Activated CD4-positive, alpha-beta memory T cell treated with anti-CD3 and anti-CD28 coated beads for 36 hours (primary cell): ENCODE measurements at regions of chr5 and their contacts with region 1.

Region 1: DNA sequence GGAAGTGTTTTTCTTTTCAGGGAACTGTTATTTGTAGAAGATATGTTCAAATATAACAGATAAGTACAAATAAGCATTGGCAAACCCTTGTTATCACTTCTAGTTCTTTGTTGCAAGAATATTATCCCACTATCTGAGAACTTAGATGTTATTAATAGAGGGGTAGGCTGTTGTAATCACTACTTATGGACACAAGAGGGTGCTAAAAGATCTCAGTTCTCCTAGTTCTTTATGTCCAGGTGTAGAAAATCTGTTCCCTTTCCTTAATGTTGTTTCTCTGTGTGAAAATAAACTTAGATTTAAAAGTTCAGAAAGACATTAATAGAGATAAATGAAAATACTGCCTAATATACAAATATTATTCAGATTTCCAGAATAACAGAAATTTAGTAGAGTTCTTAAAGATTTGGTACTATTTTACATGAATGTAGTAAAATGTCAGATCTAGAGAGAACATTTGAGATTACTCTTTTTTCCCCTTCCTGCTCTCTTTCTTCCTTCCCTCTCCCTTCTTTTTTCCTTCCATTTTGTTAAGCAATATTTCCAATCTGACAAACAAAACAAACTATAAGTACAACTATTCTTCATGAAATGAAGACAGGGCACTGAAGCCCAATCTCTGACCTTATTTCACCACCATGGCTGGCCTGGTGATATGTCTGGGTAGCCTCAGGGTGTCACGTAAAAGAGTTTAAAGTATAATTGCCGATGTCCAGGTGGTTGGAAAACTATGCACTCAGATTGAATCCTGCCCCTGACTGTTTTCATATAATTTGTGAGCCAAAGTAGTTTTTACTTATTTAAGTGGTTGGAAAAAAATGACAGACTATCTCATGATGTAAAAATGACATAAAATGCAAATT is 43.6 kb upstream of the C5orf46 start:
- DNase-seq: no peak
- H3K4me3 Mint-ChIP-seq: no peak overlapping the region
- H3K27ac Mint-ChIP-seq: no peak overlapping the region
- H3K4me1 Mint-ChIP-seq: no peaks in the 10 kb centered on the region
- H3K27me3 Mint-ChIP-seq: peaks cover 2% of the 10 kb centered on the region

Region 2: GRCh38 chr5:148374692-148375360 is 424.9 kb after region 1 on chr5:
- CTCF ChIA-PET with region 1: interaction called, 3 read pairs
- POLR2A ChIA-PET with region 1: no interaction called
- intact Hi-C with region 1: loop called (anchors 10 kb)
- DNase-seq: peak; percentile 11
- H3K4me3 Mint-ChIP-seq: no peak overlapping the region
- H3K27ac Mint-ChIP-seq: no peak overlapping the region
- H3K4me1 Mint-ChIP-seq: peaks cover 3% of the 10 kb centered on the region
- H3K27me3 Mint-ChIP-seq: no peaks in the 10 kb centered on the region